Activated CD4-positive, alpha-beta T cell treated with anti-CD3 and anti-CD28 coated beads for 36 hours (primary cell): ENCODE measurements at regions of chr10 and their contacts with region 1.

Region 1: GRCh38 chr10:62183442-62183841 is 85.2 kb downstream of the RTKN2 start:
- DNase-seq: peak; percentile 53
- ATAC-seq: peak; percentile 54
- H3K4me3 Mint-ChIP-seq: peak overlapping the region; percentile 44
- H3K27ac Mint-ChIP-seq: peak overlapping the region; percentile 99
- H3K4me1 Mint-ChIP-seq: peaks cover 89% of the 10 kb centered on the region
- H3K27me3 Mint-ChIP-seq: no peaks in the 10 kb centered on the region

Region 2: GRCh38 chr10:60974463-60975149 is 1208.8 kb before region 1 on chr10:
- CTCF ChIA-PET with region 1: no interaction called
- POLR2A ChIA-PET with region 1: no interaction called
- intact Hi-C with region 1: loop called in 1 of 2 experiments (anchors 5 kb)
- DNase-seq: no peak
- ATAC-seq: peak; percentile 98
- H3K4me3 Mint-ChIP-seq: peak overlapping the region; percentile 10
- H3K27ac Mint-ChIP-seq: peak overlapping the region; percentile 74
- H3K4me1 Mint-ChIP-seq: peaks cover 23% of the 10 kb centered on the region
- H3K27me3 Mint-ChIP-seq: peaks cover 13% of the 10 kb centered on the region

Region 3: GRCh38 chr10:61943674-61944410 is 239.6 kb before region 1 on chr10:
- CTCF ChIA-PET with region 1: interaction called, 6 read pairs
- POLR2A ChIA-PET with region 1: interaction called, 17 read pairs
- intact Hi-C with region 1: loop called (anchors 1 kb)
- DNase-seq: peak; percentile 51
- ATAC-seq: peak; percentile 78
- H3K4me3 Mint-ChIP-seq: peak overlapping the region; percentile 59
- H3K27ac Mint-ChIP-seq: peak overlapping the region; percentile 98
- H3K4me1 Mint-ChIP-seq: peaks cover 71% of the 10 kb centered on the region
- H3K27me3 Mint-ChIP-seq: no peaks in the 10 kb centered on the region

Region 4: DNA sequence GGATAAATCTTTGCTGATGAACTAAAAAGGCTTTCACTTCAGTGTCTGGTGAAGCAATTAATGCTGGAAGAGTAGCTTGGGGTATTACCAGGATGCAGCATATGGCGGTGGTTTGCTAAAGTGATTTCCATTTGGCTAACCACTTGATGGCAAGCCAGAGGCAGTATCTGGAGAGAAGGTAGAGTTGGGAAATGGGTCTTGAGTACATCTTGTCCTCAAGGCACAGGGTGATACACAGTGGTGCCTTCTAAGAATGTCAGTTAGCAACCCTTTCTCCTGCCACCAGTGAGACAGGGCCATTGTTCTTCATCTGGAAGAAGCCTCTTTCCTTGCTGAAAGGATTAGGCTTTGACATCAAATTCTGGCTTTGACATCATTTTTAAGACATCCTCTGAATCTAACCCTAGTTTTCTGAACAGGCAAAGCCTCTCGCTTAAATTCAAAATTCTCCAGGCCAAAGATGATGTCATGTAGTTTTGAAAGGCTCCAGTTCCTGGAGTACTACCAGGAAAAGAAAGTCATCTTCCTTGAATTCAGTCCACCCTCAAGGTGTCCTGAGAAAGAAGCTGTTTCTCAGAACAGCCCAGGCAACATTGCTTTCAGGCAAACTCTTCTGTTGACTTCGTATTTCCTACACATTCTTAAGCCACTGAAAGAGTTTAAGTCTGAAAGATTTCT is 119.5 kb before region 1 on chr10:
- CTCF ChIA-PET with region 1: interaction called, 4 read pairs
- POLR2A ChIA-PET with region 1: interaction called, 7 read pairs
- intact Hi-C with region 1: loop called in 1 of 2 experiments (anchors 1 kb)
- DNase-seq: no peak
- ATAC-seq: no peak
- H3K4me3 Mint-ChIP-seq: no peak overlapping the region
- H3K27ac Mint-ChIP-seq: peak overlapping the region; percentile 83
- H3K4me1 Mint-ChIP-seq: peaks cover 86% of the 10 kb centered on the region
- H3K27me3 Mint-ChIP-seq: no peaks in the 10 kb centered on the region

Region 5: GRCh38 chr10:62130948-62131347 is 52.5 kb before region 1 on chr10:
- CTCF ChIA-PET with region 1: no interaction called
- POLR2A ChIA-PET with region 1: no interaction called
- intact Hi-C with region 1: no loop called
- DNase-seq: no peak
- ATAC-seq: no peak
- H3K4me3 Mint-ChIP-seq: no peak overlapping the region
- H3K27ac Mint-ChIP-seq: no peak overlapping the region
- H3K4me1 Mint-ChIP-seq: peaks cover 9% of the 10 kb centered on the region
- H3K27me3 Mint-ChIP-seq: no peaks in the 10 kb centered on the region

Region 6: GRCh38 chr10:62224606-62225005 is 41.2 kb after region 1 on chr10:
- CTCF ChIA-PET with region 1: interaction called, 3 read pairs
- POLR2A ChIA-PET with region 1: interaction called, 11 read pairs
- intact Hi-C with region 1: loop called (anchors 1 kb)
- DNase-seq: no peak
- ATAC-seq: no peak
- H3K4me3 Mint-ChIP-seq: no peak overlapping the region
- H3K27ac Mint-ChIP-seq: peak overlapping the region; percentile 59
- H3K4me1 Mint-ChIP-seq: peaks cover 10% of the 10 kb centered on the region
- H3K27me3 Mint-ChIP-seq: no peaks in the 10 kb centered on the region

Region 7: DNA sequence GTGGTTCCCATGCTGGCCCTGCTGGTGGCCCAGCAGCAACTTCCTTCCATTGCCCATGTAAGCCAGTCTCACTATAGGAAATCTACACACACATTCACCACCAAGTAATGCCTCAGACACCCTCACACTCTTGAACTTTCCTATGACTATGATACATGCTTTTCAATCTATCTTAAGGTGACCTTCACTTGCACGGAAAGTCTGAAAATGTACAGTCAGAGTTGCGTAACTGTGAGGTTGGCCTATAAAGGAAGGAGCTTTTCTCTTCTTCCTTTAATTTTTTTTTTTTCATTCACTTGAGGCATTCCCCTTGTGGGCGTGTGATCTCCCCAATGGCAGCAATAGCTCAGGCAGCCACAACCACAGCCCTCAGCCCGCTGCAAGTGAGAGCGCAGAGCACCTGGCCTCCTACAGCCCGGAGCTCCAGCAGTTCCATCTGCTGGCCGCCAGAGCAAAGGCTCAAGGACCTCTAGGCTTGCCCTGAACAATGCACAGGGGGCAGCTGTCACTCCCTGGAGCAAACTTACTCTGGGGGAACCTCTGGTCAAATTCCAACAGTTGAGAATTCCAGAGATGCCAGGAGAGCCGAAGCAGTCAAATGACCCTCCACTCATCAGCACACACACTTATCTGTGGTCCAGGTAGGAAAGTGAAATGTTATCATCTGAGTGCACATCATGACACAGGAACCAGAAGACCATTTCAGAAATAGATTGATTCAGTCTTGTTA is 497.9 kb after region 1 on chr10:
- CTCF ChIA-PET with region 1: no interaction called
- POLR2A ChIA-PET with region 1: no interaction called
- intact Hi-C with region 1: loop called in 1 of 2 experiments (anchors 5 kb)
- DNase-seq: peak; percentile 94
- ATAC-seq: peak; percentile 94
- H3K4me3 Mint-ChIP-seq: peak overlapping the region; percentile 11
- H3K27ac Mint-ChIP-seq: peak overlapping the region; percentile 86
- H3K4me1 Mint-ChIP-seq: peaks cover 34% of the 10 kb centered on the region
- H3K27me3 Mint-ChIP-seq: peaks cover 7% of the 10 kb centered on the region

Region 8: GRCh38 chr10:63268798-63269503 is 1085.5 kb after region 1 on chr10:
- CTCF ChIA-PET with region 1: no interaction called
- POLR2A ChIA-PET with region 1: no interaction called
- intact Hi-C with region 1: loop called in 1 of 2 experiments (anchors 2 kb)
- DNase-seq: peak; percentile 86
- ATAC-seq: peak; percentile 91
- H3K4me3 Mint-ChIP-seq: peak overlapping the region; percentile 94
- H3K27ac Mint-ChIP-seq: peak overlapping the region; percentile 99
- H3K4me1 Mint-ChIP-seq: peaks cover 21% of the 10 kb centered on the region
- H3K27me3 Mint-ChIP-seq: no peaks in the 10 kb centered on the region